ENCODE measurements at regions of chr6 and their contacts with region 1.

Region 1: DNA sequence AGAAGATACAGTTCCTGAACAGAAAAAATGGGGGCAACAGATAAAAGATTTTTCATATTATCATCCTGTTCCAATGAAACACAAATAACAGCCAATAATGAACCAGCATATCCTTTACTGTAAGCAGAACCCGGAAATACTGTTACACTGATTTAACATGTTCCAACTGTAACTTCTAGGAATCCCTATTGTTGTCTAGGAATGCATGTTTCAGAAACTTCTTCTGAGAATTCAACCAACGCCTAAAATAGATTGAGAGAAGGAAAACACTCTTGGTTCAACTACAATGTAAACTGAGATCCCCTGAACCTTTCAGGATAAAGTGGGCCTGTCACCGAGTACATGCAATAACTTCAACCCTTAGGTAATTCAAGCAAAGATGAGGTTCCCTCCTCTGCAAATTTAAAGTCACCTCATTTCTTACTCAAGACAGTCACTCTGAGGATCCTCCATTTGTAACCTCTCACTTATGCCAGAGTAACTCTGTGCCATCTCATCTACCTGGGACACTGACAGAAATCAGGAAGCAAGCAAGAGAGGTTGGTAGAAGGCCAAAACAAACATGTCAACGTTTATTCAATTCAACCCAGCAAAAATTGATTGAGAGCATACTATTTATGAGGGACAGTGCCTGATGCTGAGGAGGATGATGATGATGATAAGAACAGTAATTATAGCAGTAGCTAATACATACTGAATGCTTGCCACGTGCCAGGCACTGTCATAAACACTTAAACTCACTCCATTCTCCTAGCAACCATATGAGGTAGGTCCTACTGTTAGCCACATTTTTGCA is 14.1 kb downstream of the UBE3D start:
- DNase-seq: no peak
- ATAC-seq: no peak
- H3K4me3 ChIP-seq: no peak overlapping the region
- H3K27ac ChIP-seq: no peak overlapping the region
- H3K4me1 ChIP-seq: no peaks in the 10 kb centered on the region
- H3K27me3 ChIP-seq: no peaks in the 10 kb centered on the region
- CTCF ChIP-seq: no peak
- POLR2A ChIP-seq: no peak

Region 2: GRCh38 chr6:82270881-82271645 is 780.5 kb before region 1 on chr6:
- intact Hi-C with region 1: loop called (anchors 5 kb)
- DNase-seq: no peak
- ATAC-seq: no peak
- H3K4me3 ChIP-seq: no peak overlapping the region
- H3K27ac ChIP-seq: no peak overlapping the region
- H3K4me1 ChIP-seq: no peaks in the 10 kb centered on the region
- H3K27me3 ChIP-seq: no peaks in the 10 kb centered on the region
- CTCF ChIP-seq: peak in 6 of 7 experiments; percentile 57 to 70 (median 66)
- POLR2A ChIP-seq: no peak